K562 (cell line): ENCODE measurements at regions of chr3 and their contacts with region 1.

Region 1: DNA sequence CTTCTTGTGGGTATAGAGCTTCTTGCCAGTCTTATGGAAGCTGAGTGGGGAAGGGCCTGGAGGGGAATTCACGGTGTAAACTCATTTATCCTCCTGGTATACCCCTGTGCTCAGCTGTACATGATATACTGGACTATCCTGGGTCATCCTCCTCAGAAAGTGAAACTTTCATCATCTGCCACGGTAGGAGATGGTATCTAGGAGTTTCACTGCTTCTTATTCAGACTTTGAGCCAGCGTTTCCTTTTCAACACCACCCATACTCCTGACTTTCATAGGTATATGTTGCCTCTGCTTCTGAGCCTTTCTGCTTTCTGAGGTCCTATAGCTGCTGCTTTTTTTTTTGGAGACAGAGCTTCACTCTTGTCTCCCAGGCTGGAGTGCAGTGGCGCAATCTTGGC is 15.6 kb downstream of the SENP5 start:
- DNase-seq: no peak
- ATAC-seq: peak; percentile 61
- H3K4me3 ChIP-seq: no peak overlapping the region
- H3K27ac ChIP-seq: no peak overlapping the region
- H3K4me1 ChIP-seq: peaks cover 0 to 4% of the 10 kb centered on the region in 2 experiments; a peak in 2 of 5 replicates
- H3K27me3 ChIP-seq: no peaks in the 10 kb centered on the region
- CTCF ChIP-seq: no peak
- EP300 ChIP-seq: no peak
- POLR2A ChIP-seq: no peak
- RAD21 ChIP-seq: no peak

Region 2: GRCh38 chr3:196867507-196868296 is 15.7 kb before region 1 on chr3 and contains the start of gene SENP5:
- CTCF ChIA-PET with region 1: no interaction called
- POLR2A ChIA-PET with region 1: interaction called, 10 read pairs
- in situ Hi-C with region 1: no loop called
- intact Hi-C with region 1: no loop called
- DNase-seq: peak; percentile 93 to 95 (median 94)
- ATAC-seq: peak; percentile 96
- H3K4me3 ChIP-seq: peak within 1 kb of the TSS; percentile 98
- H3K27ac ChIP-seq: peak within 1 kb of the TSS; percentile 86
- H3K4me1 ChIP-seq: peaks cover 2 to 21% of the 10 kb centered on the region in 2 experiments; a peak in 3 of 5 replicates
- H3K27me3 ChIP-seq: no peaks in the 10 kb centered on the region
- CTCF ChIP-seq: 0 out of 6 replicates have a peak, but pooled peaks of 1 of the 3 experiments have one; percentile 0
- EP300 ChIP-seq: no peak
- POLR2A ChIP-seq: peak; percentile 93
- RAD21 ChIP-seq: no peak
- polyA plus RNA-seq, gene SENP5: 18.3 to 24.8 TPM